ENCODE measurements at regions of chr22 and their contacts with region 1.

Region 1: GRCh38 chr22:50562523-50563412 is at the start of gene SYCE3:
- DNase-seq: peak; percentile 97
- ATAC-seq: peak; percentile 98
- H3K4me3 Mint-ChIP-seq: peak within 1 kb of the TSS; percentile 95
- H3K27ac Mint-ChIP-seq: peak within 1 kb of the TSS; percentile 81
- H3K4me1 Mint-ChIP-seq: peaks cover 15% of the 10 kb centered on the region
- H3K27me3 Mint-ChIP-seq: peaks cover 1% of the 10 kb centered on the region
- CTCF ChIP-seq: peak; percentile 38
- total RNA-seq, gene SYCE3: not detected in 2 replicates

Region 2: GRCh38 chr22:50525390-50526068 is 37.2 kb before region 1 on chr22 and contains the start of gene SCO2:
- CTCF ChIA-PET with region 1: interaction called, 27 read pairs
- POLR2A ChIA-PET with region 1: interaction called, 197 read pairs
- intact Hi-C with region 1: loop called (anchors 1 kb)
- DNase-seq: peak; percentile 97
- ATAC-seq: peak; percentile 52
- H3K4me3 Mint-ChIP-seq: peak within 1 kb of the TSS; percentile 84
- H3K27ac Mint-ChIP-seq: peak within 1 kb of the TSS; percentile 90
- H3K4me1 Mint-ChIP-seq: peaks cover 33% of the 10 kb centered on the region
- H3K27me3 Mint-ChIP-seq: no peaks in the 10 kb centered on the region
- CTCF ChIP-seq: no peak
- total RNA-seq, gene SCO2: 7.1 and 11.6 TPM in 2 replicates

Region 3: GRCh38 chr22:50530877-50531545 is 31.8 kb before region 1 on chr22:
- CTCF ChIA-PET with region 1: interaction called, 27 read pairs
- POLR2A ChIA-PET with region 1: interaction called, 197 read pairs
- intact Hi-C with region 1: loop called (anchors 1 kb)
- DNase-seq: peak; percentile 86
- ATAC-seq: peak; percentile 53
- H3K4me3 Mint-ChIP-seq: peak overlapping the region; percentile 92
- H3K27ac Mint-ChIP-seq: peak overlapping the region; percentile 99
- H3K4me1 Mint-ChIP-seq: peaks cover 55% of the 10 kb centered on the region
- H3K27me3 Mint-ChIP-seq: no peaks in the 10 kb centered on the region
- CTCF ChIP-seq: no peak

Region 4: GRCh38 chr22:50537765-50538164 is 25.0 kb before region 1 on chr22:
- CTCF ChIA-PET with region 1: interaction called, 7 read pairs
- POLR2A ChIA-PET with region 1: interaction called, 197 read pairs
- intact Hi-C with region 1: no loop called
- DNase-seq: no peak
- ATAC-seq: no peak
- H3K4me3 Mint-ChIP-seq: peak overlapping the region; percentile 13
- H3K27ac Mint-ChIP-seq: peak overlapping the region; percentile 91
- H3K4me1 Mint-ChIP-seq: peaks cover 82% of the 10 kb centered on the region
- H3K27me3 Mint-ChIP-seq: no peaks in the 10 kb centered on the region
- CTCF ChIP-seq: no peak

Region 5: GRCh38 chr22:50544078-50544745 is 18.6 kb before region 1 on chr22:
- CTCF ChIA-PET with region 1: interaction called, 9 read pairs
- POLR2A ChIA-PET with region 1: interaction called, 19 read pairs
- intact Hi-C with region 1: loop called (anchors 1 kb)
- DNase-seq: peak; percentile 80
- ATAC-seq: peak; percentile 38
- H3K4me3 Mint-ChIP-seq: peak overlapping the region; percentile 60
- H3K27ac Mint-ChIP-seq: peak overlapping the region; percentile 82
- H3K4me1 Mint-ChIP-seq: peaks cover 56% of the 10 kb centered on the region
- H3K27me3 Mint-ChIP-seq: no peaks in the 10 kb centered on the region
- CTCF ChIP-seq: no peak

Region 6: DNA sequence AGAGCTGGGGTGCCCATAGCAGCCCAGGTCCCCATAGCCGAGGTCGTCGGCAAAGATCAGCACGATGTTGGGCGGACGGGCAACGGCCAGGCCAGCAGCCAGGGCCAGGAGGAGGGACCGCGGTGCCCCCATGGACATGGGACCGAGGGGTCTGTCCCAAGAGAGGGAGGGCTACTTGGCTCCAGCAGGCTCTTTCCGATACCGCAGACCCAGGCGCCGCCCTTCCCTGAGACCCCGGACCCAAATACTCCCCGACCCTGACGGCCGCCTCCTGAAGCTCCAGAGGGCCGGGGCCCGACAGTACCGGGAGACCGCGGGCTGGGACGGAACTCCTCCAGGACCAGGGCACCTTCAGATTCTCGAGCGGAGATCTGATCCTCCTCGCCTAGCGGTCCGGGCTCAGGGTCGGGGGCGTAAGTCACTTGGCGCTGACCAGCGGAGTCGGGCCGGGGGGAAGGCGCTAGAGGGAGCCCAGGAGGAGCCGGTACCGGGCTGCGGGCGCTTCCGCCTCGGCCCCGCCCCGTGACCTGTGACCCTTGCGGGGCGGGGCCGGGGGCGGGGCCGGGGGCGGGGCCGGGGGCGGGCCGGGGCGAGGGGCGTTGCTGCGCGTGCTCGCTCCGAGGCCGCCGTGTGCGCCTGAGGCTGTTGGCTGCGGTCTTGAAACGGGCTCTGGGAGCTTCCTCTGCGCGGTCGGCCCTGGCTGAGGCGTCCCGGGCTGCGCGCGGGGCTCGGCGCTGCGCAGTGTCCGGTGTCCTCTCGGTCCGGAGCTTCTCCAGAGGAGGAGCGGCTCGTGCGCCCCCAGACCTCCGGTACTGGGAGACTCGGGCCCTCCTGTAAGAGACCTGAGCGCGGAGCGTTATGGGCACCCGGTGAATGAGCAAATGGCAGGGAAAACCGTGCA is 65.1 kb after region 1 on chr22 and contains the start of gene ARSA:
- CTCF ChIA-PET with region 1: no interaction called
- POLR2A ChIA-PET with region 1: no interaction called
- intact Hi-C with region 1: loop called (anchors 2 kb)
- DNase-seq: peak; percentile 66
- ATAC-seq: peak; percentile 91
- H3K4me3 Mint-ChIP-seq: peak within 1 kb of the TSS; percentile 85
- H3K27ac Mint-ChIP-seq: peak within 1 kb of the TSS; percentile 60
- H3K4me1 Mint-ChIP-seq: peaks cover 14% of the 10 kb centered on the region
- H3K27me3 Mint-ChIP-seq: no peaks in the 10 kb centered on the region
- CTCF ChIP-seq: no peak
- total RNA-seq, gene ARSA: 49.0 and 50.9 TPM in 2 replicates